ENCODE measurements at regions of chr3 and their contacts with region 1.

Region 1: DNA sequence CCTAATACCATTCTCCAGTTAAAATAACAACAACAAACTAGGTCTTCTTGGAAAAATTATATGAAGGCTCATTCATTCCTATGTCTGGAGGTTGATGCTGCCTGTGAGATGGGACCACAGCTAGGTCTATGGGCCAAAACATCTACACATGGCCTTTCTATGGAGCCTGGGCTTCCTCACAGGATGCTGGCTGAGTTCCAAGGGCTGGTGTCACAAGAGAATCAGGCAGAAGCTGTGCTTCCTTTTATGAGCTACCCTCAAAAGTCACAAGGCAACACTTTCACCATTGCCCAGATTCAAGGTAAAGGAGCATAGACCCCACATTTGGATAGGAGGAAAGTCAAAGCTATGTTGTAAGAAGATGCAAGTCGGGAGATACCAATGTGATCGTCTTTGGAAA is 4.6 kb upstream of the RTP2 start:
- DNase-seq: no peak
- ATAC-seq: no peak
- H3K4me3 ChIP-seq: no peak overlapping the region
- H3K27ac ChIP-seq: no peak overlapping the region
- H3K4me1 ChIP-seq: peaks cover 3% of the 10 kb centered on the region; the same call in 1 of the 2 replicates
- H3K27me3 ChIP-seq: peaks cover 12% of the 10 kb centered on the region
- CTCF ChIP-seq: no peak
- POLR2A ChIP-seq: no peak
- RAD21 ChIP-seq: no peak

Region 2: GRCh38 chr3:186849374-186849975 is 857.5 kb before region 1 on chr3:
- CTCF ChIA-PET with region 1: no interaction called
- POLR2A ChIA-PET with region 1: no interaction called
- dilution Hi-C with region 1: no loop called
- in situ Hi-C with region 1: no loop called
- intact Hi-C with region 1: loop called (anchors 10 kb)
- DNase-seq: peak; percentile 38
- ATAC-seq: 0 out of 2 replicates have a peak, but pooled peaks have one; percentile 37
- H3K4me3 ChIP-seq: no peak overlapping the region
- H3K27ac ChIP-seq: no peak overlapping the region
- H3K4me1 ChIP-seq: no peaks in the 10 kb centered on the region
- H3K27me3 ChIP-seq: peaks cover 32% of the 10 kb centered on the region
- CTCF ChIP-seq: peak; percentile 42
- POLR2A ChIP-seq: no peak
- RAD21 ChIP-seq: peak; percentile 45

Region 3: DNA sequence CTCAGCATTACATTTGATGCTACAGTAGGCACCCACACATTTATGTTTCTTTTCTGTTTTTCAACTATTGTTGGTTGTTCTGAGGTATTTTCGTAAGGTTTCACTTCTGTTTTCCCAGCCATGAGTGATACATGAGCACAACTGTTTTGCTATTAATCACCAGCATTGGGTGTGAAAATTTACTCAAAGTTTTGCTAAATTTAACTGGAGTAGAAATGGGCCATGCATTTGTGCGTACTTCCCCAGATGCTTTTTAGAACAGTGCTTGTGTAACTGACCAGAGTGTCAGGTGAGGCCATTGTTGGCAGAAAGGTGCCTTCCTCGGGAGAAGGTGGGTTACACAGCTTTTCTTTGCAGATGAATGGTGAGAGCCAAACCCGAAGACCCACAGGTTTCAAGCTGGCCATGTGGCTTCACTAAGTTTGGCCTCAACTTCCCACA is 706.2 kb before region 1 on chr3:
- CTCF ChIA-PET with region 1: no interaction called
- POLR2A ChIA-PET with region 1: no interaction called
- dilution Hi-C with region 1: no loop called
- in situ Hi-C with region 1: no loop called
- intact Hi-C with region 1: no loop called
- DNase-seq: no peak
- ATAC-seq: no peak
- H3K4me3 ChIP-seq: no peak overlapping the region
- H3K27ac ChIP-seq: no peak overlapping the region
- H3K4me1 ChIP-seq: no peaks in the 10 kb centered on the region
- H3K27me3 ChIP-seq: no peaks in the 10 kb centered on the region
- CTCF ChIP-seq: no peak
- POLR2A ChIP-seq: no peak
- RAD21 ChIP-seq: no peak

Measured in IMR-90 (cell line).